ENCODE measurements at regions of chr17 and their contacts with region 1.

Region 1: DNA sequence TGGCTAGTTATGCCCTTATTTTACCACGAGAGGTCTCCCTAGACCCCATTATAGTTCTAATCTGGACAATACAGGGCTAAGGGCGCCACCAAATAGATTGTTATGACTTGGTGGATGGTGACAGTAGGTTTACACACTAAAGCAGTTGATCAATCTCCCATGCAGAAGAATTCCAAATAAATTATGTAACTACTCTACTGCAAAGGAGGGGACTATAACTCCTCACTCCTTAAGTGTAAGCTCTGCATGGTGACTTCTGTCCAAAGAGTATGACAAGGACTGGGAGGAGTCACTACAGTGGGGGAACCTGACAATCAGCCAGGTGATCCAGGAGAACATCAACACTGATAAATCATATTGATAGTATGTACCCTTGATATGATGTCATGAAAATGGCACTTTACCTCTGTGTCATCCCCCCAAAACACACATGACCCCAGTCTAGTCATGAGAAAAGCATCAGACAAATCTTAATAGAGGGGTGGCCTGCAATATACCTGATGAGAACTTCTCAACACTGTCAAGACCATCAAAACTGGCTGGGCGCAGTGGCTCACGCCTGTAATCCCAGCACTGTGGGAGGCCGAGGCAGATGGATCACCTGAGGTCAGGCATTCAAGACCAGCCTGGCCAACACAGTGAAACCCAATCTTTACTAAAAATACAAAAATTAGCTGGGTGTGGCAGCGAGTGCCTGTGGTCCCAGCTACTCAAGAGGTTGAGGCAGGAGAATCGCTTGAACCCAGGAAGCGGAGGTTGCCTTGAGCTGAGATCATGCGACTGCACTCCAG is 20.1 kb upstream of the YPEL2 start:
- DNase-seq: peak; percentile 66 to 81 (median 71)
- ATAC-seq: peak; percentile 98
- H3K4me3 ChIP-seq: no peak overlapping the region
- H3K27ac ChIP-seq: no peak overlapping the region
- H3K4me1 ChIP-seq: 0 out of 5 replicates have a peak, but pooled peaks cover 0 to 4% of the 10 kb centered on the region in 2 experiments
- H3K27me3 ChIP-seq: no peaks in the 10 kb centered on the region
- CTCF ChIP-seq: peak; percentile 81 to 94 (median 88)
- EP300 ChIP-seq: no peak
- POLR2A ChIP-seq: no peak
- RAD21 ChIP-seq: peak; percentile 94 to 95

Region 2: DNA sequence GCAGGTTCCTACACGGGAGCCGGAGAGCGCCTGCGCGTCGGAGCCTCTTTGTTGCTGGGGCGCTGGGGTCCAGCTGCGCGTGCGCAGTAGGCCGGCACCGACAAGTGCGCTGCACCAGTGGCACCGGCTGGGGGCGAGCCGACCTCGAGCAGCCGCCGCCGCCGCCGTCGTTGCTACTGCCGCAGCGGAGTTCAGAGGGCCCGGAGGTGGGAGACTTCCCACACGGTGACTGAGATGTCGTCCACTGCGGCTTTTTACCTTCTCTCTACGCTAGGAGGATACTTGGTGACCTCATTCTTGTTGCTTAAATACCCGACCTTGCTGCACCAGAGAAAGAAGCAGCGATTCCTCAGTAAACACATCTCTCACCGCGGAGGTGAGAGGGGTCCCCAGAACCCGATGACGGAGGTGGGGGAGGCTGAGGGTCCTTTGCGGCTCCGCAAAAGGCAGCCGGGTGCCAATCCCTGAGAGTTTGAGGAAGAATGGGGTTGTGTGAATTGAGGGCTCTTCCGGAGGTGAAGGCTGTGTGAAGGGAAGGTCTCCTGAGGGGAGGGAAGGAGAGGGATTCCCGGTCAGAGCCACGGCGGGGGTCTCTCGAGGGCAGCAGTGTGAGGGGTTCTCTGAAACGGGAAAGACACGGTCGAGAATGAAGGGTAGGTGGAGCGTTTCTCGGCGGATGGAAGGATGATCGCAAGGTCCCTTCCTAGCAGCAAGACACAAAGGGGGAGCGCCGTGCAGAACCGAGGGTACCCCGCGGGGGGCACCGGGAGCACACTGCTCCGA is 90.8 kb before region 1 on chr17 and contains the start of gene GDPD1:
- CTCF ChIA-PET with region 1: interaction called, 6 read pairs
- POLR2A ChIA-PET with region 1: no interaction called
- in situ Hi-C with region 1: no loop called
- intact Hi-C with region 1: loop called (anchors 1 kb)
- DNase-seq: peak; percentile 95 to 99 (median 97)
- ATAC-seq: peak; percentile 98
- H3K4me3 ChIP-seq: peak within 1 kb of the TSS; percentile 93
- H3K27ac ChIP-seq: peak within 1 kb of the TSS; percentile 90
- H3K4me1 ChIP-seq: peaks cover 3 to 11% of the 10 kb centered on the region in 2 experiments; a peak in 2 of 5 replicates
- H3K27me3 ChIP-seq: no peaks in the 10 kb centered on the region
- CTCF ChIP-seq: peak; percentile 80 to 89 (median 83)
- EP300 ChIP-seq: no peak
- POLR2A ChIP-seq: peak; percentile 78
- RAD21 ChIP-seq: peak; percentile 82 to 90
- polyA plus RNA-seq, gene GDPD1: 7.8 to 8.1 TPM

Region 3: GRCh38 chr17:59357929-59358328 is 46.6 kb after region 1 on chr17:
- CTCF ChIA-PET with region 1: no interaction called
- POLR2A ChIA-PET with region 1: no interaction called
- in situ Hi-C with region 1: no loop called
- intact Hi-C with region 1: no loop called
- DNase-seq: no peak
- ATAC-seq: no peak
- H3K4me3 ChIP-seq: no peak overlapping the region
- H3K27ac ChIP-seq: no peak overlapping the region
- H3K4me1 ChIP-seq: no peaks in the 10 kb centered on the region
- H3K27me3 ChIP-seq: peaks cover 8 to 23% of the 10 kb centered on the region in 2 experiments; a peak in 4 of 5 replicates
- CTCF ChIP-seq: no peak
- EP300 ChIP-seq: no peak
- POLR2A ChIP-seq: no peak
- RAD21 ChIP-seq: no peak

Region 4: DNA sequence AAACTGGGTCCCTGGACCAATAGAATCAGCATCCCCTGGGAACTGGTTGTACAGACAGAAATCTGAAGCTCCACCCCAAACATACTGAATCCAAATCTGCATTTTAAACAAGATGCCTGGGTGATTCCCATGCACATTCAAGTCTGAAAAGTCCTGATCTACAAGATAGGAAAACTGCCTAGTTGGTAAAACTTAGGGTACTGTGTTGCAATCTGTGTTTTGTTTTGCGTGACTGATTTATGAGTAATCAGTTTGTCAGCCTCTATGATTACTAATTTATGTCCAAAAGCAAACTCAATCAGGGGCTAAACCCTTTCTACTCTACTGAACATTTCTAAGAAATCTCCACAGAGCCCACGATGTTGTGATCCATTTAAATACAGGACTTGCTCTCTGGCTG is 123.9 kb after region 1 on chr17:
- CTCF ChIA-PET with region 1: interaction called, 15 read pairs
- POLR2A ChIA-PET with region 1: interaction called, 3 read pairs
- in situ Hi-C with region 1: loop called (anchors 5 kb)
- intact Hi-C with region 1: no loop called
- DNase-seq: no peak
- ATAC-seq: no peak
- H3K4me3 ChIP-seq: no peak overlapping the region
- H3K27ac ChIP-seq: no peak overlapping the region
- H3K4me1 ChIP-seq: no peaks in the 10 kb centered on the region
- H3K27me3 ChIP-seq: peaks cover 12 to 19% of the 10 kb centered on the region in 2 experiments; a peak in 4 of 5 replicates
- CTCF ChIP-seq: no peak
- EP300 ChIP-seq: no peak
- POLR2A ChIP-seq: no peak
- RAD21 ChIP-seq: no peak

Region 5: GRCh38 chr17:59440784-59441441 is 129.6 kb after region 1 on chr17:
- CTCF ChIA-PET with region 1: interaction called, 15 read pairs
- POLR2A ChIA-PET with region 1: interaction called, 3 read pairs
- in situ Hi-C with region 1: loop called (anchors 5 kb)
- intact Hi-C with region 1: loop called (anchors 1 kb)
- DNase-seq: peak; percentile 77 to 93 (median 78)
- ATAC-seq: peak; percentile 99
- H3K4me3 ChIP-seq: no peak overlapping the region
- H3K27ac ChIP-seq: no peak overlapping the region
- H3K4me1 ChIP-seq: no peaks in the 10 kb centered on the region
- H3K27me3 ChIP-seq: peaks cover 8 to 11% of the 10 kb centered on the region in 2 experiments; a peak in 4 of 5 replicates
- CTCF ChIP-seq: peak; percentile 85 to 92 (median 89)
- EP300 ChIP-seq: no peak
- POLR2A ChIP-seq: no peak
- RAD21 ChIP-seq: peak; percentile 90 to 96

Region 6: GRCh38 chr17:59521204-59522126 is 210.1 kb after region 1 on chr17:
- CTCF ChIA-PET with region 1: interaction called, 10 read pairs
- POLR2A ChIA-PET with region 1: no interaction called
- in situ Hi-C with region 1: no loop called
- intact Hi-C with region 1: no loop called
- DNase-seq: peak; percentile 73 to 91 (median 88)
- ATAC-seq: peak; percentile 95
- H3K4me3 ChIP-seq: no peak overlapping the region
- H3K27ac ChIP-seq: no peak overlapping the region
- H3K4me1 ChIP-seq: peaks cover 0 to 7% of the 10 kb centered on the region in 2 experiments; a peak in 2 of 5 replicates
- H3K27me3 ChIP-seq: peaks cover 0 to 2% of the 10 kb centered on the region in 2 experiments; a peak in 1 of 5 replicates
- CTCF ChIP-seq: peak; percentile 81 to 95 (median 90)
- EP300 ChIP-seq: no peak
- POLR2A ChIP-seq: no peak
- RAD21 ChIP-seq: peak; percentile 85 to 92

Region 7: DNA sequence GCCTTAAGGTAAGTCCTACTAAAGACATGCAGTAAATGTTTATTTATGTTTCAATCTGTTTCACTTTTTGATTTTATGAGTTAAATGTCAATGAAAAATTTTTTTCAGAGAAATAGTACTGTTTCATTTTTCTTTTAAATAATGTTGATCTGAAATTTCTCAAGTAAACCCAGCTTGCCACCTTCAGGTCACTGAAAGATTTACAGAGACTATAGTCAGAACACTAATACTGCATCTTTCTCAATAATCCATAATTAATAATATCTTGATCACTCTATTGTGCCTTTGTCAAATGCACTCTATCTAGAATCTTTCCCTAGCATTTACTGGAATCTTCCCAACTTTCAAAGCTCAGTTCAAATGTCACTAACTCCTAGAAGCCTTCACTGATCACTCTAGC is 247.7 kb after region 1 on chr17:
- CTCF ChIA-PET with region 1: interaction called, 4 read pairs
- POLR2A ChIA-PET with region 1: no interaction called
- in situ Hi-C with region 1: no loop called
- intact Hi-C with region 1: loop called (anchors 2 kb)
- DNase-seq: no peak
- ATAC-seq: no peak
- H3K4me3 ChIP-seq: no peak overlapping the region
- H3K27ac ChIP-seq: no peak overlapping the region
- H3K4me1 ChIP-seq: peaks cover 3 to 7% of the 10 kb centered on the region in 2 experiments; a peak in 3 of 5 replicates
- H3K27me3 ChIP-seq: peaks cover 5% of the 10 kb centered on the region in 2 experiments; a peak in 3 of 5 replicates
- CTCF ChIP-seq: peak in 2 of 3 experiments; percentile 34 to 53; a peak in 3 of 6 replicates
- EP300 ChIP-seq: no peak
- POLR2A ChIP-seq: no peak
- RAD21 ChIP-seq: peak; percentile 52 to 59